GM12878 (cell line): ENCODE measurements at regions of chr12 and their contacts with region 1.

Region 1: DNA sequence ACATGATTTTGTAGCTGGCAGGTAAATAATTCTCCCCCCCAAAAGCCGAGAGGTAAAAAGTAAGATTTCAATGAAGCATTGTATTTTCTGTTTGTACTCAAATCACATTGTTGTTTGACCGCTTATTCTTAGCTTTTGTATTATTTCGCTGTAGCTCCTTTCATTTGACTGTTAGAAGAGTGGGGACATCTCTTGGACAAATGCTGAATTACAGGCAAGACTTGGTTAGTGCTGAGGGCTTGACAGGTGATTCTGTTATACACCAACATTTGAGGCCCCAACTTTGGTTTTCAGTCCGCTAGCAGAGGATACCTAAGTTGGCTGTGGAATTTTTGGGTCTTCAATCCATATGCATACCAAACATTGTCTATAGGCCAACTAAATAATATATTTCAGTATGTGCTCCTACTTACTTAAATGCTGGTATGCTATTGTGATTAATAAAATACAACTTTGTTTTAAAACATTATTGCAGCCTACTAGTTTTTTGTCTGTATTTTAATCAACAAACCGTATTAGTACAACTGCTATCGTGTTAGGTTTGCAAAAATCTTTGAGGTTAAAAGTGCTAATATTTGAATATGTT is 102.2 kb downstream of the ERC1 start:
- DNase-seq: no peak
- ATAC-seq: peak; percentile 77
- H3K4me3 ChIP-seq: no peak overlapping the region
- H3K27ac ChIP-seq: no peak overlapping the region
- H3K4me1 ChIP-seq: peaks cover 18% of the 10 kb centered on the region
- H3K27me3 ChIP-seq: no peaks in the 10 kb centered on the region
- CTCF ChIP-seq: peak; percentile 60 to 85 (median 81)
- EP300 ChIP-seq: no peak
- POLR2A ChIP-seq: no peak
- RAD21 ChIP-seq: peak; percentile 93

Region 2: GRCh38 chr12:575948-576612 is 517.2 kb before region 1 on chr12:
- CTCF ChIA-PET with region 1: interaction called, 6 read pairs
- POLR2A ChIA-PET with region 1: no interaction called
- RAD21 ChIA-PET with region 1: interaction called, 10 read pairs
- SMC1A ChIA-PET with region 1: interaction called, 4 read pairs
- in situ Hi-C with region 1: no loop called
- intact Hi-C with region 1: no loop called
- DNase-seq: peak; percentile 40
- ATAC-seq: peak; percentile 99
- H3K4me3 ChIP-seq: no peak overlapping the region
- H3K27ac ChIP-seq: peak overlapping the region; percentile 26
- H3K4me1 ChIP-seq: peaks cover 10% of the 10 kb centered on the region
- H3K27me3 ChIP-seq: no peaks in the 10 kb centered on the region
- CTCF ChIP-seq: peak; percentile 90 to 99 (median 96)
- EP300 ChIP-seq: no peak
- POLR2A ChIP-seq: peak; percentile 59
- RAD21 ChIP-seq: peak; percentile 79

Region 3: GRCh38 chr12:823028-823698 is 270.1 kb before region 1 on chr12:
- CTCF ChIA-PET with region 1: interaction called, 24 read pairs
- POLR2A ChIA-PET with region 1: no interaction called
- RAD21 ChIA-PET with region 1: interaction called, 3 read pairs
- SMC1A ChIA-PET with region 1: interaction called, 3 read pairs
- in situ Hi-C with region 1: no loop called
- intact Hi-C with region 1: no loop called
- DNase-seq: peak; percentile 82
- ATAC-seq: peak; percentile 99
- H3K4me3 ChIP-seq: peak overlapping the region; percentile 21; the same call in 1 of the 2 replicates
- H3K27ac ChIP-seq: peak overlapping the region; percentile 54
- H3K4me1 ChIP-seq: peaks cover 14% of the 10 kb centered on the region; the same call in 1 of the 2 replicates
- H3K27me3 ChIP-seq: no peaks in the 10 kb centered on the region
- CTCF ChIP-seq: no peak
- EP300 ChIP-seq: peak in 1 of 2 experiments; percentile 82; a peak in 2 of 4 replicates
- POLR2A ChIP-seq: no peak
- RAD21 ChIP-seq: no peak

Region 4: DNA sequence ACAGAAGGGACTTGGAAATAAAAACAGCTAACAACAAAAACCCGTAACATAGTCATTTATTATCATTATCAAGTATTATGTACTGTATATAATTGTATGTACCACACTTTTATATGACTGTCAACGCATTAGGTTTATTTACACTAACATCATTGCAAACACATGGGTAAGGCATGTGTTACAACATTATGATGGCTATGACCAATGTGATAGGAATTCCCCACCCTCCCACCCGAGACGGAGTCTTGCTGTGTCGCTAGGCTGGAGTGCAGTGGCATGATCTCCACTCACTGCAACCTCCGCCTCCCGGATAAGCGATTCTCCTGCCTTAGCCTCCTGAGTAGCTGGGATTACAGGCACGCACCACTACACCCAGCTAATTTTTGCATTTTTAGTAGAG is 19.6 kb before region 1 on chr12:
- CTCF ChIA-PET with region 1: interaction called, 56 read pairs
- POLR2A ChIA-PET with region 1: interaction called, 4 read pairs
- RAD21 ChIA-PET with region 1: interaction called, 11 read pairs
- SMC1A ChIA-PET with region 1: interaction called, 31 read pairs
- in situ Hi-C with region 1: no loop called
- intact Hi-C with region 1: no loop called
- DNase-seq: no peak
- ATAC-seq: no peak
- H3K4me3 ChIP-seq: no peak overlapping the region
- H3K27ac ChIP-seq: no peak overlapping the region
- H3K4me1 ChIP-seq: no peaks in the 10 kb centered on the region; the same call in 1 of the 2 replicates
- H3K27me3 ChIP-seq: peaks cover 0 to 2% of the 10 kb centered on the region in 2 experiments; a peak in 1 of 4 replicates
- CTCF ChIP-seq: no peak
- EP300 ChIP-seq: no peak
- POLR2A ChIP-seq: no peak
- RAD21 ChIP-seq: no peak

Region 5: GRCh38 chr12:1267243-1267642 is 174.0 kb after region 1 on chr12:
- CTCF ChIA-PET with region 1: no interaction called
- POLR2A ChIA-PET with region 1: no interaction called
- RAD21 ChIA-PET with region 1: no interaction called
- SMC1A ChIA-PET with region 1: no interaction called
- in situ Hi-C with region 1: no loop called
- intact Hi-C with region 1: no loop called
- DNase-seq: no peak
- ATAC-seq: no peak
- H3K4me3 ChIP-seq: no peak overlapping the region
- H3K27ac ChIP-seq: no peak overlapping the region
- H3K4me1 ChIP-seq: no peaks in the 10 kb centered on the region
- H3K27me3 ChIP-seq: no peaks in the 10 kb centered on the region
- CTCF ChIP-seq: no peak
- EP300 ChIP-seq: no peak
- POLR2A ChIP-seq: no peak
- RAD21 ChIP-seq: no peak

Region 6: DNA sequence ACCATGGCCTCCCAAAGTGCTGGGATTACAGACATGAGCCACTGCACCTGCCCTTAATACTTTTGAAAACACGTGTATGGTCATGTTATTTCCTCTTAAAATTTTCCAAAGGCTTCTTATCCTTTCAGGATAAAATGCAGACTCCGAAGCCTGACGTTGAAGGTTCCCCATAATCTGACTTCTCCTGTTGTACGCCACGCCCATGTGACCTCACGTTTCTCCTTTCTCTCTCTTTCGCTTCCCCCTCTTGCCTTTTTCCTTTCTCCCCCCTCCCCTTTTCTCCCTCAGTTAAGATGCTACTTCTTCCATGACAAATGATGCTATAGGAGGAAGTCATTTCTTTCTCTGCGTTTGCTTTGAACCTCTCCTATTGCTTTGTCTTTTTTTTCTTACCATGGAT is 235.1 kb after region 1 on chr12:
- CTCF ChIA-PET with region 1: no interaction called
- POLR2A ChIA-PET with region 1: no interaction called
- RAD21 ChIA-PET with region 1: no interaction called
- SMC1A ChIA-PET with region 1: no interaction called
- in situ Hi-C with region 1: no loop called
- intact Hi-C with region 1: no loop called
- DNase-seq: no peak
- ATAC-seq: no peak
- H3K4me3 ChIP-seq: no peak overlapping the region
- H3K27ac ChIP-seq: no peak overlapping the region
- H3K4me1 ChIP-seq: peaks cover 4% of the 10 kb centered on the region; the same call in 1 of the 2 replicates
- H3K27me3 ChIP-seq: no peaks in the 10 kb centered on the region
- CTCF ChIP-seq: no peak
- EP300 ChIP-seq: no peak
- POLR2A ChIP-seq: no peak
- RAD21 ChIP-seq: no peak